SK-N-SH (cell line): ENCODE measurements at regions of chr17 and their contacts with region 1.

Region 1: GRCh38 chr17:45428050-45428617 is 4.5 kb downstream of the ARHGAP27 start:
- DNase-seq: peak; percentile 94
- H3K4me3 ChIP-seq: no peak overlapping the region; a peak in 1 of 4 replicates
- H3K27ac ChIP-seq: no peak overlapping the region
- H3K4me1 ChIP-seq: peaks cover 0 to 16% of the 10 kb centered on the region in 2 experiments; a peak in 1 of 4 replicates
- H3K27me3 ChIP-seq: no peaks in the 10 kb centered on the region
- CTCF ChIP-seq: peak; percentile 88
- EP300 ChIP-seq: no peak
- RAD21 ChIP-seq: peak; percentile 84

Region 2: DNA sequence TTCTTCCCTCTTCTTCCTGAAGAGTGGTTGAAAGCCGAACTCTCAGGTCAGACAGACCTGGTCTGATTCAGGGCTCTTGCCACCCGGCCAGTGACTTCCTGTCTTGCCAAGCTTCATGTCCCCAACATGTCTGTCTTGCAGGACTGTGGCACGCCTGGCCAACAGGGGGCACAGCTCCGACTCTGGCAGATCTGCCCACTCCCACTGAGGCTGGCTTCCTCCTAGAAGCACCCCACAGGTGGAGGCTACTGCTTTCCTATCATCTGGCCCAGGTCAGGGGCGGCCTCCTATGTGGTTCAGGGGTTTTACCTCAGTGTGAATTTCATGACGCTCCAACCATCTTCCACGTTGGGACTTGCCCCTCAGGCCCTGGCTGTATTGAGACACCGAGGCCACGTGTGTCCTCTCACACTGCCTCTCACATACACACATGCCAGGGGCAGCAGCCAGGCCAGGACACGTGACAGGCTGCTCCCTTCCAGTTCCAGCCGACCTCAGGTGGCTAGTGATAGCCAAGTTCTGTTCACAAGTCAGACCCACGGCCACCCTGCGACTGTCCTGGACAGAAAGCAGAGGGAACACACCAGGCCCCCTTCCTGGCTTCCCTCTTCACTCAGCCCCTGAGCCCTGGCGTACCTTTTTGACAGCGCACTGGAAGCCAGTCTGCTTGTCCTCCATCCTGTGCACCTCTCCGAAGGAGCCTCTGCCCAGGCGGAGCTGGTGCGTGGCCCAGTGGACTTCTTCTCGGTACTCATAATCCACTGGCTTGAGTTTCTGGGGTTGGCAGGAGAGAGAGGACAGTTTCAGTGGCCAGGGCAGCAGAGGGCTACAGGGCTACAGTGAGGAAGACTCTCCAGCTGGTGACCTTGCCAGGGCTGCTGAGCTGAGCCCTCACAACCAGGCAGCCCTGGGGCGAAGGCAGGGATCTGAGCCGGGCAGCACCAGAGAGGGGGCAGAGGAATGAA is 143.7 kb before region 1 on chr17:
- CTCF ChIA-PET with region 1: no interaction called
- POLR2A ChIA-PET with region 1: no interaction called
- DNase-seq: no peak
- H3K4me3 ChIP-seq: no peak overlapping the region
- H3K27ac ChIP-seq: no peak overlapping the region; a peak in 1 of 4 replicates
- H3K4me1 ChIP-seq: peaks cover 0 to 36% of the 10 kb centered on the region in 2 experiments; a peak in 2 of 4 replicates
- H3K27me3 ChIP-seq: no peaks in the 10 kb centered on the region
- CTCF ChIP-seq: peak; percentile 42
- EP300 ChIP-seq: no peak
- RAD21 ChIP-seq: peak; percentile 24; the same call in 1 of the 2 replicates

Region 3: DNA sequence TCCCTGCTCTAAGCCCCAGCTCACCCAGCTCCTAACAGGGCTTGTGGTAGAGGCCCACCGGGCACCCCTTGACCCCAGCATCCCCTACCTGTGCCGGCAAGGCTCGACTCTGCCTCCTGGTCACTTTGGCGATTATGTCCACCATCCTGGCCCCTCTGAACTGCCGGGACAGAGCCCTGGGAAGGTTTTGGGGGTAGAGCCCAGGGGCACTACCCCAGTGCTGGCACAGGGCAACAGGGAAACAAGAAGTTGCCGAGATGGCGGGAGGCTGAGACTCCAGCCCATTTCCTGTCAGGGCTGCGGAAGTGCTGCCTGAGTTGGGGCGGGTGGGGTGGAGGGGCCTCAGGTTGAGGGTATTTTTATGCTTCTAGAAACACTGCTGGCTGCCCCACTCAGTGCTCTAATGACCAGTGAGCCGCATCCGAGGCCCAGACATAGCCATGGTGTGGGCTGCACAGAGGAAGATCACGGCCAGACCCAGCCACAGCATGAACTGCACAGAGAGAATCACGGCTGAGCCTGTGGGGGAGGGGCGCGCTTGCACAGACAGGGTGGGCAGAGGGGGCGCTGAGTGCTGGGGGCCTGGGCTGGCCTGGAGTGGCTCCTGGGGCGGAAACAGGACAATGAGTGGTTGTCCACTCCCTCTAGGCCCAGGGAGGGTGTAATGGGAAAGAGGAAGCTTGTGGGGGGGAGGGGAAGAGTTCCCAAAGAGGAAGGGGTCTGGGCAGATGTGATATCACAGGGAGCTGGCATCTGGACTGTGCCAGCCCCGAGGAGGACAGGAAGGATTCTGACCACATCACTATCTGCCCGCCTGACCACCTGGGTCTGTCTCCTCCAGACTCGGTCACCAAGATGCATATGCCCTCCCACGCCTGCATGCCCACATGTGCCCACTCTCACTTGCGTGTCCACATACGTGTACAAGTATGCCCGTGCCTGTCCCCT is 17.7 kb before region 1 on chr17:
- CTCF ChIA-PET with region 1: interaction called, 15 read pairs
- POLR2A ChIA-PET with region 1: no interaction called
- DNase-seq: peak; percentile 59
- H3K4me3 ChIP-seq: no peak overlapping the region
- H3K27ac ChIP-seq: no peak overlapping the region
- H3K4me1 ChIP-seq: peaks cover 0 to 25% of the 10 kb centered on the region in 2 experiments; a peak in 1 of 4 replicates
- H3K27me3 ChIP-seq: no peaks in the 10 kb centered on the region
- CTCF ChIP-seq: no peak
- EP300 ChIP-seq: no peak
- RAD21 ChIP-seq: no peak

Region 4: DNA sequence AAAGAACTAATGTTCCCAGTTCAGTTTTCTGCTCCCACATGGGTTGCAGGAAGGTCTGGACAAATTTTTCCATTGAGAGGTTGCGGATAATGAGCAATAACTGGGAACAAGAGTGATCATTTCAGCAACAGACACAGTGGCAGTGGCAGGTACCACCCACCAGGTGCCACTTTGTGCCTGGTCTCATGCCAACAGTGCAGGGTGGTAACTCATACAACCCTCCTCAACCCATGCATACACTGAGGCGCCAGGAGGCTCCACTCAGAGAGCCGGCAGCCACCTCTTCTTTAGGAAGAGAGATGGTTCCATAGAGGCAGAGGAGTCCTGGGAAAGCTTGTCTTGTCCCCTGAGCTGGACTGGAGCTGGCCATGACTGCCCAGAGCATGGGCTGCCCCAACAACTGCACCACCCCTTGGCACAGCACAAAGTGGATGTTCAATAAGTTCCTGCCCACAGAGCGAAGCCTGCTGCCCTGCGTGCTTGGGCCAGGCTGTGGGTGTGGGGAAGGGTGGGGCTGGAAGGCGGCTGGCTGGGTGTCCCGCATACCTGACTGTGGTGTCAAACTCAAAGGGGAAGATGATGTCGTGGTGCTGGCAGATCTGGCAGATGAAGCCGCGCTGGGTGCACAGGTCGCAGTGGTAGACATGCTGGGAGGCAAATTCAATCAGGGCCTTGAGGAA is 10.9 kb after region 1 on chr17:
- CTCF ChIA-PET with region 1: interaction called, 16 read pairs
- POLR2A ChIA-PET with region 1: no interaction called
- DNase-seq: no peak
- H3K4me3 ChIP-seq: no peak overlapping the region
- H3K27ac ChIP-seq: no peak overlapping the region
- H3K4me1 ChIP-seq: peaks cover 0 to 61% of the 10 kb centered on the region in 2 experiments; a peak in 1 of 4 replicates
- H3K27me3 ChIP-seq: no peaks in the 10 kb centered on the region
- CTCF ChIP-seq: no peak
- EP300 ChIP-seq: no peak
- RAD21 ChIP-seq: no peak